ENCODE measurements at regions of chr5 and their contacts with region 1.

Region 1: GRCh38 chr5:179697993-179698934 is 503 bp upstream of the CANX start:
- DNase-seq: peak; percentile 94 to 99 (median 99)
- ATAC-seq: peak; percentile 93
- H3K4me3 ChIP-seq: peak overlapping the region; percentile 72
- H3K4me3 Mint-ChIP-seq: peak overlapping the region; percentile 89 to 97 (median 96)
- H3K27ac ChIP-seq: peak overlapping the region; percentile 100
- H3K27ac Mint-ChIP-seq: peak overlapping the region; percentile 94 to 100 (median 98)
- H3K4me1 ChIP-seq: peaks cover 21 to 25% of the 10 kb centered on the region in 2 donors
- H3K4me1 Mint-ChIP-seq: peaks cover 23 to 53% (median 46%) of the 10 kb centered on the region in 7 donors
- H3K27me3 ChIP-seq: no peaks in the 10 kb centered on the region
- H3K27me3 Mint-ChIP-seq: no peaks in the 10 kb centered on the region

Region 2: DNA sequence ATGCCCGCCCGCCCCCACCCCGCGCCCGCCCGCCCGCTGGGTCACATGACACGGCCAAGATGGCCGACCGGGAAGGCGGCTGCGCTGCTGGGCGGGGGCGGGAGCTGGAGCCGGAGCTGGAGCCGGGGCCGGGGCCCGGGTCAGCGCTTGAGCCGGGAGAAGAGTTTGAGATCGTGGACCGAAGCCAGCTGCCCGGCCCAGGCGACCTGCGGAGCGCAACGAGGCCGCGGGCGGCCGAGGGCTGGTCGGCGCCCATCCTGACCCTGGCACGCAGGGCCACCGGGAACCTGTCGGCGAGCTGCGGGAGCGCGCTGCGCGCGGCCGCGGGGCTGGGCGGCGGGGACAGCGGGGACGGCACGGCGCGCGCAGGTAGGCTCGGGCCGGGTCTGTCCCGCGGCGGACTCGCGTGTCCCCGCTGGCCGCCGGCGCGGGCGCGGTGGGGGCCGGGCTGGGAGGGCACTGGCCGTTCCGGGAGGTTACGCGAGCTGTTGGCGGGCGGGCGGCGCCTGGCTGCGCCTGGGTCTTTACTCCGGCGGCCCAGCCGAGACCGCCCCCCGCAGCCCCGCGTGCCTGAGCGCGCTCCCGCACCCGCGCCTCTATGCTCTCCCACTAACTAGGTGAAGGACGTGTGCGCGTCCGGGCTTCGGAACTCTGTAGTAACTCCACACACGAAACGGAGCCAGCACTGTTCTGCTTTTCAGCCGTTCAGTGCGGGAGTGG is 147.6 kb before region 1 on chr5 and contains the start of gene RUFY1:
- CTCF ChIA-PET with region 1: no interaction called
- POLR2A ChIA-PET with region 1: no interaction called
- intact Hi-C with region 1: loop called (anchors 1 to 2 kb)
- DNase-seq: peak; percentile 74 to 92 (median 87)
- ATAC-seq: peak; percentile 90
- H3K4me3 ChIP-seq: peak within 1 kb of the TSS; percentile 84
- H3K4me3 Mint-ChIP-seq: peak within 1 kb of the TSS; percentile 94 to 99 (median 96)
- H3K27ac ChIP-seq: peak within 1 kb of the TSS; percentile 87
- H3K27ac Mint-ChIP-seq: peak within 1 kb of the TSS; percentile 91 to 99 (median 98)
- H3K4me1 ChIP-seq: peaks cover 12 to 15% of the 10 kb centered on the region in 2 donors
- H3K4me1 Mint-ChIP-seq: peaks cover 10 to 49% (median 35%) of the 10 kb centered on the region in 7 donors
- H3K27me3 ChIP-seq: no peaks in the 10 kb centered on the region
- H3K27me3 Mint-ChIP-seq: peaks cover 0 to 4% (median 0%) of the 10 kb centered on the region in 5 donors
- total RNA-seq, gene RUFY1: 31.8 to 63.0 (median 52.3) TPM

Region 3: GRCh38 chr5:179678223-179679013 is 19.8 kb before region 1 on chr5:
- CTCF ChIA-PET with region 1: interaction called, 3 read pairs
- POLR2A ChIA-PET with region 1: interaction called, 20 read pairs
- intact Hi-C with region 1: loop called (anchors 1 kb)
- DNase-seq: peak; percentile 88 to 95 (median 92)
- ATAC-seq: peak; percentile 91
- H3K4me3 ChIP-seq: peak overlapping the region; percentile 99
- H3K4me3 Mint-ChIP-seq: peak overlapping the region; percentile 95 to 99 (median 98)
- H3K27ac ChIP-seq: peak overlapping the region; percentile 87
- H3K27ac Mint-ChIP-seq: peak overlapping the region; percentile 89 to 99 (median 97)
- H3K4me1 ChIP-seq: peaks cover 4 to 5% of the 10 kb centered on the region in 2 donors
- H3K4me1 Mint-ChIP-seq: peaks cover 15 to 39% (median 30%) of the 10 kb centered on the region in 7 donors
- H3K27me3 ChIP-seq: no peaks in the 10 kb centered on the region
- H3K27me3 Mint-ChIP-seq: peaks cover 0 to 5% (median 0%) of the 10 kb centered on the region in 5 donors

Region 4: DNA sequence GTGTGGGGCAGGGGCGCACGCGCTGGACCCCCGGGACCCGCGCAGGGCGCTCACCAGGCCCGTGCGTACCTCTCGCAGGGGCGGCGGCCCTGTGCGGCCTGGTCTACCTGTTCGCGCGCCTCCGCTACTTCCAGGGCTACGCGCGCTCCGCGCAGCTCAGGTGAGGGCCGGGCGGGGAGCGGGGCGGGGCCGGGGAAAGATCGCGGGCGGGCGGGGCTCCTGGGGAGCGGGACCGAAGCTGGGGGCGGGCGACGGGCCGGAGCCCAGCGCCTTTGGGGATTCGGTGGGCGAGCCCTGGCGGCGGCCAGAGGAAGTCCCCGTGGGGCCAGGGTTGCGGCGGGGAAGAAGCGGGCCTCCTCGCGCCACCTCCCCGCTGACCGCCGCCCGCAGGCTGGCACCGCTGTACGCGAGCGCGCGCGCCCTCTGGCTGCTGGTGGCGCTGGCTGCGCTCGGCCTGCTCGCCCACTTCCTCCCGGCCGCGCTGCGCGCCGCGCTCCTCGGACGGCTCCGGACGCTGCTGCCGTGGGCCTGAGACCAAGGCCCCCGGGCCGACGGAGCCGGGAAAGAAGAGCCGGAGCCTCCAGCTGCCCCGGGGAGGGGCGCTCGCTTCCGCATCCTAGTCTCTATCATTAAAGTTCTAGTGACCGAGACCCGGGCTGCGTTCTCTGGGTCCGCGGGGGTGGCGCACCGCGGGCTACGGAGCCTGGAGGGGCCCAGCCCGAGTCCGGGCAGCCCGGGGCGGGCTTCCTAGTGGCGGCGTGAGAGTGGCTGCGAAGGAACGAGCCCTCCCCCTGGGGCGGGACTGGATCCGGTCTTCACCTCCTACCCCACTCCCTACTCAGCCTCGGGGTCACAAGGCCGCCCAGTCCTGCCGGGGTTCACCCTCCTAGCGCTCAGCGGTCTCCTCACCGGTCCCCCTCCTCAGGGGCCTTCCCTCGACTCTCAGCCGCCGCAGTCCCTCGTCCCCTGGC is 97.9 kb after region 1 on chr5:
- CTCF ChIA-PET with region 1: no interaction called
- POLR2A ChIA-PET with region 1: no interaction called
- intact Hi-C with region 1: loop called (anchors 1 to 5 kb)
- DNase-seq: peak; percentile 37 to 81 (median 65)
- ATAC-seq: peak; percentile 84
- H3K4me3 ChIP-seq: peak overlapping the region; percentile 48
- H3K4me3 Mint-ChIP-seq: peak overlapping the region; percentile 40 to 78 (median 64)
- H3K27ac ChIP-seq: peak overlapping the region; percentile 68
- H3K27ac Mint-ChIP-seq: peak overlapping the region in 4 of 9 donors; percentile 17 to 80 (median 33)
- H3K4me1 ChIP-seq: peaks cover 24 to 28% of the 10 kb centered on the region in 2 donors
- H3K4me1 Mint-ChIP-seq: peaks cover 20 to 33% (median 30%) of the 10 kb centered on the region in 7 donors
- H3K27me3 ChIP-seq: no peaks in the 10 kb centered on the region
- H3K27me3 Mint-ChIP-seq: no peaks in the 10 kb centered on the region

Region 5: DNA sequence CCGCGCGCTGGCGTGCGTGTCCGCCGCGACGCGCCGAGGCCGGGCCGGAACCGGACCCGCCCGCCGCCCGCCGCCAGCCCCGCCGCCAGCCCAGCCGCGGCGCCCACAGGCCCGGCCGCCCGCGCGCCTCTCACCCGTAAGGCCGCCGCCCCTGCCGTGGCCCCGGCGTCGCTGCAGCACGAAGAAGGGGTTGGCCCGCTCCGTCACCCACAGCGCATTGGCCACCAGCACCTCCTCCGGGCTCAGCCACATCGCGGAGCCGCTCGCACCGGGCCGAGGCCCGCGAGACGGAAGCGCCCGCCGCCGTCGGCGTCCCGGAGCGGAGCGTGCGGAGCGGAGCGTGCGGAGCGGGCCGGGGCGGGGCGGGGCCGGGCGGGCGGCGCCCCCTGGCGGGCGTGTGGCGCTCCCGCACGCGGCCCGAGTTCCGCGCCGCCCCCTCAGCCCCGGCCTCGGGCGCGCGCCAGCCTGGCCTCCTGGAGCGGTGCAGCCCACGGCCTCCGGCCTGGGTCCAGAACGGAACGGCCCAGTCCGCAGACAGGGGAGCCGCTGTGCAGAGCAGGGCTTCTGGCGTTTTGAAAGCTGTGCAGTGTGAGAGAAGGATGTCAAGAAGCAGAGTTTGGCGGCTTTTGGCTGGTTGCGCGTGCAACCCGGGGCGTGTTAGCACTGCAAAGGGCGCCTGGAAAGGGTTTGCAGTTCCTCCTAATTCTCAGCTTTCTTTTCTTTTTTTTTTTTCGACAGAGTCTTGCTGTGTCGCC is 209.5 kb after region 1 on chr5 and contains the start of gene TBC1D9B:
- CTCF ChIA-PET with region 1: no interaction called
- POLR2A ChIA-PET with region 1: interaction called, 3 read pairs
- intact Hi-C with region 1: loop called in 1 of 2 experiments (anchors 5 kb)
- DNase-seq: peak; percentile 68 to 81 (median 73)
- ATAC-seq: peak; percentile 95
- H3K4me3 ChIP-seq: peak within 1 kb of the TSS; percentile 64
- H3K4me3 Mint-ChIP-seq: peak within 1 kb of the TSS; percentile 78 to 92 (median 90)
- H3K27ac ChIP-seq: peak within 1 kb of the TSS; percentile 56
- H3K27ac Mint-ChIP-seq: peak within 1 kb of the TSS; percentile 42 to 91 (median 85)
- H3K4me1 ChIP-seq: peaks cover 13 to 14% of the 10 kb centered on the region in 2 donors
- H3K4me1 Mint-ChIP-seq: peaks cover 7 to 40% (median 23%) of the 10 kb centered on the region in 7 donors
- H3K27me3 ChIP-seq: no peaks in the 10 kb centered on the region
- H3K27me3 Mint-ChIP-seq: no peaks in the 10 kb centered on the region
- total RNA-seq, gene TBC1D9B: 71.3 to 117 (median 86.9) TPM

Measured in naive thymus-derived CD4-positive, alpha-beta T cell (primary cell).